Posterior cingulate gyrus (tissue), 11 donors: ENCODE measurements at regions of chr6 and their contacts with region 1.

Region 1: GRCh38 chr6:158972241-158973233 is 27.5 kb downstream of the RSPH3 start:
- DNase-seq: no peak

Region 2: DNA sequence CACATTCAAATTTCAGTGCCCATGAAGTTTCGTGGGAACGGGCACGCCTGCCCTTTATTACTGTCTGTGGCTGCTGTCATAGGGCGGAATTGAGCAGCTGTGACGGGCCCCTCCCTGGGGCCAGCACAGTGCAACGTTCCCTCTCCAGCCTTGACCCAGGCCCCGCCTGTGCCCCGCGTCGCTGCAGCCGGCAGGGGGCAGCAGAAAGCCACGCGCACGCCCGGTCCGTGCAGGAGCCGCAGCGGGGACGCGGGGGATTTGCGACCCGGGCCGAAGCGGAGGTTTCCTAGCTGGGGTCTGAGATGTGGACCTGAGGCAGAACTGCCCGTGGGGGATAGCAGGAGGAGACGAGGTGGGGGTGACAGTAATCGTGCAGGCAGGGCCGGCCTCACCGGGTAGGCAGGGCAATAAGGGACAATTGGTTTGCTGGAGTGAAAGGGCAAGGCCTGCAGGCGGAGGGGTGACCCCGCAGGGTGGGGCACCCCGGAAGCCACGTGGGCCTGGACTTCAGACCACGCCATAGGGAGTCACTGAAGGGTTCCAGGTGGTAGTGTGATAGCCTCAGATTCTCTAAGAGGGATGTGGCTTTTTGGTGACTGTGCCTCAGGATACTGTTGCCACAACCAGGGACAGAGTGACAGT is 268.2 kb before region 1 on chr6:
- intact Hi-C with region 1: loop called (anchors 1 kb)
- DNase-seq: peak; percentile 47 to 96 (median 76)

Region 3: GRCh38 chr6:158826801-158827573 is 145.6 kb before region 1 on chr6:
- intact Hi-C with region 1: loop called (anchors 10 kb)
- DNase-seq: no peak